Activated T-helper 1 cell treated with anti-CD3 and anti-CD28 coated beads, Interleukin-12 subunit alpha, Interleukin-12 subunit beta, Interleukin-2, Interleukin-4 antibody, amounts not matched to agents 30 ng/mL and 10 ng/mL and 1 ng/mL, durations not matched to agents 14 hours and 24 hours and 36 hours (primary cell): ENCODE measurements at regions of chr11 and their contacts with region 1.

Region 1: GRCh38 chr11:118353084-118353710 is 6.2 kb upstream of the UBE4A start:
- DNase-seq: no peak
- H3K4me3 Mint-ChIP-seq: no peak overlapping the region
- H3K27ac Mint-ChIP-seq: peak overlapping the region; percentile 40
- H3K4me1 Mint-ChIP-seq: peaks cover 30% of the 10 kb centered on the region
- H3K27me3 Mint-ChIP-seq: no peaks in the 10 kb centered on the region

Region 2: GRCh38 chr11:118295834-118296454 is 57.3 kb before region 1 on chr11:
- intact Hi-C with region 1: loop called (anchors 1 kb)
- DNase-seq: no peak
- H3K4me3 Mint-ChIP-seq: no peak overlapping the region
- H3K27ac Mint-ChIP-seq: no peak overlapping the region
- H3K4me1 Mint-ChIP-seq: peaks cover 29% of the 10 kb centered on the region
- H3K27me3 Mint-ChIP-seq: no peaks in the 10 kb centered on the region

Region 3: DNA sequence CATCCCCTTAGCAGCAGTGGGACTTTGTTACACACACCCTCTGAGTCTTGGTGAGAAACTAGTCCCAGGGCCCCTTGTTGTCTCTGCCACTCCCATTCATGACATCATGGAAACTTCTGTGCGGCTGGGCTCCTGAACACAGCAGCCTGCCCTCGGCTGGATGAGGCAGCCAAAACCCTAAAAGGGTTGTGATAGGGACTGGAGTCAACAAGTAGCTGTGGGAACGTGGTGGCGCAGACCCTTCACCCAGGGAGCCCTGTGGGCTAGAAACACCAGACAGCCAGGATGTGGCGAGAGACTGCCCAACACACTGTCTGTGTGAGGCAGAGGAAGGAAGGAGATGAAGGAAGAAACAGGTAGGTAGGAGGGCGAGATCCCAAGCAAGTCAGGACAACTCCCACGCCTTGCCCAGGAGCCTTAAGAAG is 14.5 kb before region 1 on chr11:
- intact Hi-C with region 1: loop called (anchors 1 kb)
- DNase-seq: peak; percentile 86
- H3K4me3 Mint-ChIP-seq: peak overlapping the region; percentile 90
- H3K27ac Mint-ChIP-seq: peak overlapping the region; percentile 99
- H3K4me1 Mint-ChIP-seq: peaks cover 68% of the 10 kb centered on the region
- H3K27me3 Mint-ChIP-seq: no peaks in the 10 kb centered on the region

Region 4: GRCh38 chr11:118366287-118366686 is 13.1 kb after region 1 on chr11:
- intact Hi-C with region 1: no loop called
- DNase-seq: no peak
- H3K4me3 Mint-ChIP-seq: no peak overlapping the region
- H3K27ac Mint-ChIP-seq: no peak overlapping the region
- H3K4me1 Mint-ChIP-seq: peaks cover 16% of the 10 kb centered on the region
- H3K27me3 Mint-ChIP-seq: no peaks in the 10 kb centered on the region